ENCODE measurements at regions of chr3 and their contacts with region 1.

Region 1: GRCh38 chr3:141255846-141256261 is 24.2 kb downstream of the PXYLP1 start:
- DNase-seq: peak; percentile 32
- CTCF ChIP-seq: peak; percentile 17

Region 2: GRCh38 chr3:141192345-141192744 is 63.5 kb before region 1 on chr3:
- CTCF ChIA-PET with region 1: no interaction called
- POLR2A ChIA-PET with region 1: no interaction called
- DNase-seq: peak; percentile 84
- CTCF ChIP-seq: peak; percentile 98

Region 3: DNA sequence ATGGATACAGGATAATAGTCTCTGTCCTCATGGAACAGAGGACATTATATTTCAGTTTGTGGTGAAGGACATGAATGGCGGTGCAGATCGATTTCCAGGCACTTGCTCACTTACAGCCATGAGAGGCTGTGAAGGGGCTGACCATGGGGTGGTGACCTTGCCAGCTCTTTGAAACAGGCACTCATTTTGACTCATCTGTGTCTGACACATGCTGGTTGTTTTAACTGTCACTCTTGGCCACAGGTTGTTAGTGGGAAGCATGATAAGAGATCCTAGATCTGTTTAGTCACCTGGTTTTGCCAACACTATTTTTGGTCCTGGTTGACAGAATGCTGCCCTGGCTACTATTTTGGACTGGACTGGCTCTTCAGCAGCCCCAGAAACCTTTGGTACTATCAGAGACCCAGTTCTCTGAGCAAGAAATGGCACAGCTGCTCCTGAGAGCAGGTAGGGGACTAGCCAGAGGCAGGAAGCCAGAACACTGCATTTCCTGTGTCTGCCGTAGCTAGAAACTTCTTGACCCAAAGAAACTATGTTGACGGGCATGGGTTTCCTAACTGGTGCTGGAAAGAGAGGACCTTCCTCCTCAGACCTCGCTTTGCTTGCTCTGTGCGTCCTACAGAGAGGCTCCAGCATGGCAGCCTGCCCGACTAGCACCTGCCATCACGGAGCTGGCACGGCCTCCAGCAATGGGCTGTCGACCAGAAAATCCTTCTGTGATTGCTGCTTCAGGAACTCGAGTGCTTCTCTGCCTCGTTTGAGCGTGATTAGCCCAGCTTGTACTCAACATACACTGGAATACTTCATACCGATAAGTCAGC is 17.9 kb before region 1 on chr3:
- CTCF ChIA-PET with region 1: interaction called, 24 read pairs
- POLR2A ChIA-PET with region 1: no interaction called
- DNase-seq: no peak
- CTCF ChIP-seq: no peak

Region 4: DNA sequence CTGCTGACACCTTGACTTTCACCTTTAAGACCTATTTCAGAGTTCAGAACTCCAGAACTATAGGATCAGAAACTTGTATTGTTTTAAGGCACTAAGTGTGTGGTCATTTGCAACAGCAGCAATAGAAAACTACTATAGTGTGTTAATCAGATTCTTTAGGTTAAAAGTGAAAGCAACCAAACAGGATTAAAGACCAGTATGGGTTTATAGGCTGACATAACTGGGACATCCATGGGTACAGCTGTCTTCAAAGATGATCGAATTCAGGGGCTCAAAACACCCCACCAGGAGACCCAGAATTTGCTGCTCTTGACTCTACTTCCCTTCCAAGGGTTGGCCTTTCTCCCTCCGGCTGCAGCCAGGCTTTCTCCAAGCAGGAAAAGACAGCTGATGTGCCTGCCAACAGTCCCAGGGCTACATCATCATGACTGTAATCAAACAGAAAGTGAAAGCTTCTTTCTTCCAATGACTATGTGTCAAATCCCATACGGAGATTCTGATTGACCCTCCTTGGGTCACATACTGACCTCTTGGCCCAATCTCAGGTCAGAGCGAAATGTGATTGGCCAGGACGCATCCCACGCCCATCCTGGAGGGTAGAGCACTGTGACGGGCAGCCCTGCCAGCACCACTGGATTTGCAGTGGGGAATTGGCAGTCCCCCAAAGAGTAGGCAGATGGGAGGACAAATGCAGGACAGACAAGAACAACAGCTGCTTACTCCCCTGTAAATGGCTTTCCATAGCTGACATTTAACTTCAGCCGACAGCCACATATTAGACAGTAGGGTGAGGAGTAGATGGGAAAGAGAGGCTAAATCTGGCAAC is 430.8 kb after region 1 on chr3:
- CTCF ChIA-PET with region 1: no interaction called
- POLR2A ChIA-PET with region 1: interaction called, 10 read pairs
- DNase-seq: no peak
- CTCF ChIP-seq: no peak